ENCODE measurements at regions of chr1 and their contacts with region 1.

Region 1: DNA sequence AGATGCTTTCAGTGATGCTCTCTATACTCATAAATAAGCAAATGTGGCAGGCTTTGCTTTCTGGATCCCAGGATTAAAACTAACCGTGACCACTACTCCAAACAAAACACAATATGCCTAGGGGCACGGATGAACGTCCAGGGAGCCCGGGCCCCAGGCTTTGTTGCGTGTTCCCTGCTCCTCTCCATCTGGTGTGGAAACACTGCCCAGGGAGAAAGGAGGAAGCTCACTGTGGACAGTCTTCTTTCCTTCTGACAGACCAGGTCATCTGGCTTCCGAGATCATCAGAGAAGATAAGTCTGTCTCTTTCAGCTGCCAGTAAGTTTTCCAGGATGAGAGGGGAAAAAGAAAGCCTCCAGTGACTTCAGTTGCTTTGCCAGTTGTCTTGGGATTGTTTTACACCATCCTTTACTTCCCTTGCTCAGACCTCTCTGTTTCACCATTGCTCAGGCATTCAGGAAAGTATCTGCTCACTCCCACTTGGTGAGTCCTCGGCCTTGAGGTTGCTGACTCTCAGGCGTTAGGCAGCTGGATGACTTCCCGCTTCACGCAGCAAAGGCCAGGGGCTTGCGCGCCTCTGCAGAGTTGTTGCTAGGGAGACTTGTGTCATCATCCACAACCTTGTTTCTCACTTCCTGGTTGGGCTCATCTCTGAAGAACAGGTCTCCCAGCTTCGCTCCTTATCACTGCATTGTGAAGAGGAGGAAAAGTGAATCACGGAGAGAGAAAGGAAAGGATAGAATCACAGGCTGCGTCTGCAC is 20.6 kb upstream of the PGD start:
- DNase-seq: peak; percentile 83
- ATAC-seq: peak; percentile 24

Region 2: GRCh38 chr1:10430216-10431069 is 52.2 kb after region 1 on chr1 and contains the start of gene CENPS:
- intact Hi-C with region 1: loop called (anchors 2 kb)
- DNase-seq: peak; percentile 96
- ATAC-seq: peak; percentile 97
- total RNA-seq, gene CENPS: 7.6 TPM

Region 3: GRCh38 chr1:11501558-11501897 is 1123.3 kb after region 1 on chr1:
- intact Hi-C with region 1: no loop called
- DNase-seq: no peak
- ATAC-seq: peak; percentile 54